Activated CD4-positive, alpha-beta memory T cell treated with anti-CD3 and anti-CD28 coated beads, Interleukin-2, amount 10 ng/mL, durations not matched to agents 7 days and 5 days (primary cell): ENCODE measurements at regions of chr7 and their contacts with region 1.

Region 1: DNA sequence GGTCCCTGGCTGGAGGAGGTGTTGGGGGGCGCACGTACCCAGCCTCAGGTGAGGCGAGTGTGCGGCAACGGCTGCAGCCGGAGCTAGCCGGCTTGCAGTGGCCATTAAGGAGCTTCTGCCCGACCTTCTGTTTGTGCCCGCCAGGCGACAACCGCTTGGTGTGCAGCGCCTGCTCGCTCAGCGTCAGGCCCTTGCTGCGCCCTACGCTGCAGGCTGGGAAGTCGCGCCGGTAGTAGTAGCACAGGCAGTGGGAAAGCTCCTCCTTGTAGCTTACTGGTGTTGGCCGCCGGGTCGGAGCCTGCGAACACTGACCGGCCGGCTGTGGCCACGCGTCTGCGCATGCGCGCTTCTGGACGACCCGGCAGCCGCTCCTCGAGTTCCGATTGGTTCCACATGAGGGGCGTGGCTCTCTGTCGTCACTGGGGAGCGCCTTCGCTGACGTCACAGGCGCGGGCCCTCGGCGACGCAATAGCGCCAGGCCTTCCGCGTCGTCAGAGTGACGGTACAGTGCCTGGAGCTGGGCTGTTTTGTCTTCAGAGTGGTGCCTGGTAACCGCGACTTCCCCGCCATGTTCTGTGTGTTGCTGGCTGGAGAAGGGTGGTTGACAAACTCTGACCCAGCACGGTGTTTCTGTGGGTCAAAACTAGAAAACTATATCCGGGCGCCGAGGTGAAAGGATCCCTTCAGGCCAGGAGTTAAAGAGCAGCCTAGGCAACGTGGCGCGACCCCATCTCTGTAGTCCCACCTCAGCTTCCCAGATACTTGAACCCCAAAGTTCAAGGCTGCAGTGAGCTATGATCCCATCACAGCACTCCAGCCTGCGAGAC is 76.3 kb upstream of the TMEM248 start:
- DNase-seq: peak; percentile 99
- H3K4me3 Mint-ChIP-seq: peak overlapping the region; percentile 98
- H3K27ac Mint-ChIP-seq: peak overlapping the region; percentile 99
- H3K4me1 Mint-ChIP-seq: peaks cover 36% of the 10 kb centered on the region
- H3K27me3 Mint-ChIP-seq: peaks cover 2% of the 10 kb centered on the region

Region 2: GRCh38 chr7:66617295-66617694 is 227.5 kb before region 1 on chr7:
- CTCF ChIA-PET with region 1: no interaction called
- POLR2A ChIA-PET with region 1: no interaction called
- DNase-seq: no peak
- H3K4me3 Mint-ChIP-seq: no peak overlapping the region
- H3K27ac Mint-ChIP-seq: no peak overlapping the region
- H3K4me1 Mint-ChIP-seq: no peaks in the 10 kb centered on the region
- H3K27me3 Mint-ChIP-seq: no peaks in the 10 kb centered on the region

Region 3: GRCh38 chr7:66740302-66740979 is 104.3 kb before region 1 on chr7 and contains the start of gene RABGEF1:
- CTCF ChIA-PET with region 1: no interaction called
- POLR2A ChIA-PET with region 1: interaction called, 25 read pairs
- DNase-seq: peak; percentile 97
- H3K4me3 Mint-ChIP-seq: peak within 1 kb of the TSS; percentile 93
- H3K27ac Mint-ChIP-seq: peak within 1 kb of the TSS; percentile 96
- H3K4me1 Mint-ChIP-seq: peaks cover 38% of the 10 kb centered on the region
- H3K27me3 Mint-ChIP-seq: no peaks in the 10 kb centered on the region
- total RNA-seq, gene RABGEF1: 22.1 to 24.2 TPM

Region 4: DNA sequence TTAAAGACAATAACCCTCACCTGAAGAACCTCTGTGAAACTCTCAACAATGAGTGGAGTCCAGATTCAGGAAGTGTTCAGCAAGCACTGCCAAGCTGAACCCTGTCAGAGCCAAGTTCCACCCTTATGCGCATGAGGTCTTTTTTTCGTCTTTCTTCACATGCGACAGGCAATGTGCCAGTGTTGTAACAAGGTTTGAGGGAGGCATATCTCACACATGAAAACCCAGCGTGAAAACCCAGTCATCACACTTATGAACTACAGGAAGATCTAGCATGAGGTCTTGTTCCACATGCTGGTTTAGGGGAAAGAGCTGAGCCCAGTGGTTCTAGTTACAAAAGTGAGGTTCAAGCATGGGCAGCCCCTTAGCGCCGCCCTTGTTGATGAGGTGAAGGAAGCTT is 54.6 kb before region 1 on chr7:
- CTCF ChIA-PET with region 1: no interaction called
- POLR2A ChIA-PET with region 1: no interaction called
- DNase-seq: no peak
- H3K4me3 Mint-ChIP-seq: no peak overlapping the region
- H3K27ac Mint-ChIP-seq: no peak overlapping the region
- H3K4me1 Mint-ChIP-seq: no peaks in the 10 kb centered on the region
- H3K27me3 Mint-ChIP-seq: no peaks in the 10 kb centered on the region

Region 5: DNA sequence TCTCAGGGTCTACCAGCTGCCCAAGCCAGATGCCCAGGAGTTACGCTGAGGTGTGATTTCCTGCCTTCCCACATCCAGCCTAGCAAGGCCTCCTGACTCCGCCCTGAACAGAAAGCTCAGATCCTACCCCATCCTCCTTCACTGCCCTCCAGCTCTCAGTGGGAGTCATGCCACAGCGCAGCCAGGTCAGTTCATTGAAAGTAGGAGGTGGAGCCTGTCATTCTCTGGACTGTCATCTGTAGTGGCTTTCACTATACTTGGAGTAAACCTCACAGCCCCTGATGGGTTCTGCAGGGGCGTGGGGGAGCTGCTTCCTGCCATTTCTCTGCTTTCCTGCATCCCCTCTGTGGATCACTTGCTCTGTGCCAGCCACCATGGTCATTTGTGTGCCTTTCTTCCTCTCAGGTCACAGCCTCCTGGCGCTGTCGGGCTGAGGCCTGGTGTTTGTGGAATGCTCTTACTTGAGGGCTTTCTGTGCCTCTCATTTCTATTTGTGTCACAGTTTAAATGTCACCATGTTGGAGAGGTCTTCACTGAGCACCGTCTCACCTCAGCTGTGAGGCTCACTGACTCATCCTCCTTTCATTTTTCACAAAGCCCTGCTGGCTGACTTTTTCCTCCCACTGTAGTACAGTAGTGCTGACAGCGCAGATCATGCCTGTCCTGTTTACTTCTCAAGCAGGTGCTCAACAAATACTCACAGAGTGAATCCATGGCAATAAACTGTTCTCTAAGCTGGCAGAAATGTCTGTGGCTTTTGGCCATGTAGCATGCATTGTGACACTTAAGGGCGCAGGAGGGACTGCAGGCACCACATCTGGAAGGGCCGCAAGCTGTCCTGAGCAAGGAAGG is 15.3 kb after region 1 on chr7:
- CTCF ChIA-PET with region 1: interaction called, 17 read pairs
- POLR2A ChIA-PET with region 1: interaction called, 47 read pairs
- DNase-seq: peak; percentile 64
- H3K4me3 Mint-ChIP-seq: peak overlapping the region; percentile 51
- H3K27ac Mint-ChIP-seq: peak overlapping the region; percentile 96
- H3K4me1 Mint-ChIP-seq: peaks cover 23% of the 10 kb centered on the region
- H3K27me3 Mint-ChIP-seq: no peaks in the 10 kb centered on the region

Region 6: DNA sequence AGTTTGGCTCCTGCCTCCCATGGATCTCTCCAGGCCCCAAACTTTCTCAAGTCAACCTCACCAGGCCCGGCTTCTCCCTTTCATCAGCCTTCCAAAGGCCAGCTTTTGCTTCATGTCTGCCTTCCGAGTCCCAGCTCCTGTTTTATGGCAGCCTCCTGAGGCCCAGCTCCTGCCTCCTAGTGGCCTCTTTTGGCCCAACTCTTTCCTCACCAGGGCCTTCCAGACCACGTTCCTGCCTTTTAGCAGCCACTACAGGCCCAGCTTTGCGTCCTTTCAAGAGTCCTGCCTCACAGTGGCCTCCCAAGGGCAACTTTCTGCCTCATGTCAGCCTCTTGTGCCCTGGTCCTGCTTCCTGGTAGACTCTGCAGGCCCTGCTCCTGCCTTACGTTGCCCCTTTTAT is 60.9 kb after region 1 on chr7:
- CTCF ChIA-PET with region 1: interaction called, 7 read pairs
- POLR2A ChIA-PET with region 1: interaction called, 11 read pairs
- DNase-seq: no peak
- H3K4me3 Mint-ChIP-seq: no peak overlapping the region
- H3K27ac Mint-ChIP-seq: no peak overlapping the region
- H3K4me1 Mint-ChIP-seq: no peaks in the 10 kb centered on the region
- H3K27me3 Mint-ChIP-seq: no peaks in the 10 kb centered on the region

Region 7: GRCh38 chr7:66952343-66953043 is 107.7 kb after region 1 on chr7:
- CTCF ChIA-PET with region 1: no interaction called
- POLR2A ChIA-PET with region 1: no interaction called
- DNase-seq: no peak
- H3K4me3 Mint-ChIP-seq: no peak overlapping the region
- H3K27ac Mint-ChIP-seq: no peak overlapping the region
- H3K4me1 Mint-ChIP-seq: no peaks in the 10 kb centered on the region
- H3K27me3 Mint-ChIP-seq: no peaks in the 10 kb centered on the region